ENCODE measurements at regions of chr19 and their contacts with region 1.

Region 1: DNA sequence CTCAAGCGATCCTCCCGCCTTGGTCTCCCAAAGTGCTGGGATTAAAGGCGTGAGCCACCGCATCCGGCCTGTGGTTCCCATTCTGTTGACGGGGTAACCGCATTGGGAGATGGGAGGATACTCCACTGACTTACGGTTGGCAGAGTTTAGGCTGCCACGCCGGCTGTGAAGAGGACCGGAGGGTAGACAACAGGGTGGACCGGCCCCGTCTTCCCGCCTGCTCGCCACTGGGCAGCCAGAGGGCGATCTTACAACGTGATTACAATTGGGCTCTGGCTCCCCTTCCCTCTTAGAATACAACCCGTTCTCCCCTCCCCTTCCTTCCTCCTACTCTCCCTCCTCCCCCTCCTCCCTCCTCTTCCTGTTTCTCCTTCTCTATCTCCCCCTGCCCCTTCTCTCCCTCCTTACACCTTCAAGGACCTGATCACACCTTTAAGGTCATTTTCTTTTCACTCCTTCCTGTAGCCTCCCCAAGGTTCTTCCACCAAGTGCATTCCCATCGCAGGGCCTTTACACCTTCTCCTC is 957 bp upstream of the CCDC194 start:
- H3K4me3 Mint-ChIP-seq: no peak overlapping the region
- H3K27ac Mint-ChIP-seq: no peak overlapping the region
- H3K4me1 Mint-ChIP-seq: peaks cover 27% of the 10 kb centered on the region
- H3K27me3 Mint-ChIP-seq: peaks cover 8% of the 10 kb centered on the region

Region 2: DNA sequence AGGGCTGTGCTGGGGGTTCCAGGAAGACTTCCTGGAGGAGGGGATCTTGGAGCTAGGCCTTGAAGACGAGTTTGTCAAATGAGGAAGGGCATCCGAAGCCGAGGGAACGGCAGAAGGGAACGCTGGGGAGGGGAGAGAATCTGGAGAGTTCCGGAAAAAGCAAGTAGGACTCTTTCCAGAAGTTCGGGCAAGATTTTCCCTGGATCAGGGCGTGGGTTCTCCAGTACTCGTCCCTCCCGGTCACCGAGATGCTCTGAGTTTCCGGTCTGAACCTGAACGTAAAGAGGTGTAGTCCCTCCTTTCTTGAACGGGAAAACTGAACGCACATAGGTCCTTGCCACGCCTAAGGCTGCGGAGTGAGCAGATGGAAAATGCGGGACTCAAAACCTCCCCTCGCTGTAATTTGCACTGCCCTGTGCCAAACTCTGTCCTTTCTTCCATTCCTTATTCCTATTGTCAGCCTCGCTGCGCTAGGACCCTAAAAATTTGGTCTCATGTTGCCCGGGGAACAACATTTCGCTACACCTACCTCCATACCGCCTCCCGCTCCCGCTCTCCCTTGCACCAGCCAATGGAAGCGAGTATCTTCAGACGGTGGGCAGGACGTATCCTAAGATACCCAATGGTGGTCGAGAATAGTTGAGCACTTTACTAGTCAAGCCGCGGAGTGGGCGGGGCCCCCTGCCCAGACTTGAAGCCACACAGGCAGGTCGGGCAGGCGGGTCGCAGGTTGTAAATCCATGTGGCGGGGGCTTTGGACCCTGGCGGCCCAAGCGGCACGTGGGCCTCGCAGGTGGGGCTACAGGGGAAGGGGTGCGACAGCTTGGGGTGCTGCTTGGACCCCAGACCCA is 57.9 kb before region 1 on chr19 and contains the start of gene GTPBP3:
- intact Hi-C with region 1: no loop called
- H3K4me3 Mint-ChIP-seq: peak within 1 kb of the TSS; percentile 97
- H3K27ac Mint-ChIP-seq: peak within 1 kb of the TSS; percentile 99
- H3K4me1 Mint-ChIP-seq: peaks cover 65% of the 10 kb centered on the region
- H3K27me3 Mint-ChIP-seq: no peaks in the 10 kb centered on the region

Region 3: GRCh38 chr19:17429641-17430113 is 34.7 kb after region 1 on chr19:
- intact Hi-C with region 1: no loop called
- H3K4me3 Mint-ChIP-seq: no peak overlapping the region
- H3K27ac Mint-ChIP-seq: no peak overlapping the region
- H3K4me1 Mint-ChIP-seq: peaks cover 12% of the 10 kb centered on the region
- H3K27me3 Mint-ChIP-seq: no peaks in the 10 kb centered on the region

Region 4: GRCh38 chr19:17448131-17448967 is 53.4 kb after region 1 on chr19 and contains the start of gene TMEM221:
- intact Hi-C with region 1: loop called (anchors 5 kb)
- H3K4me3 Mint-ChIP-seq: peak within 1 kb of the TSS; percentile 61
- H3K27ac Mint-ChIP-seq: no peak within 1 kb of the TSS
- H3K4me1 Mint-ChIP-seq: peaks cover 9% of the 10 kb centered on the region
- H3K27me3 Mint-ChIP-seq: peaks cover 30% of the 10 kb centered on the region

Region 5: GRCh38 chr19:17775245-17775916 is 380.4 kb after region 1 on chr19:
- intact Hi-C with region 1: no loop called
- H3K4me3 Mint-ChIP-seq: no peak overlapping the region
- H3K27ac Mint-ChIP-seq: no peak overlapping the region
- H3K4me1 Mint-ChIP-seq: peaks cover 43% of the 10 kb centered on the region
- H3K27me3 Mint-ChIP-seq: no peaks in the 10 kb centered on the region